Activated CD4-positive, alpha-beta memory T cell treated with anti-CD3 and anti-CD28 coated beads, Interleukin-2, amount 10 ng/mL, durations not matched to agents 7 days and 5 days (primary cell): ENCODE measurements at regions of chr2 and their contacts with region 1.

Region 1: GRCh38 chr2:102240640-102241370 is 54.0 kb downstream of the IL1RL2 start:
- DNase-seq: peak; percentile 89
- H3K4me3 Mint-ChIP-seq: no peak overlapping the region
- H3K27ac Mint-ChIP-seq: peak overlapping the region; percentile 18
- H3K4me1 Mint-ChIP-seq: peaks cover 33% of the 10 kb centered on the region
- H3K27me3 Mint-ChIP-seq: peaks cover 11% of the 10 kb centered on the region

Region 2: DNA sequence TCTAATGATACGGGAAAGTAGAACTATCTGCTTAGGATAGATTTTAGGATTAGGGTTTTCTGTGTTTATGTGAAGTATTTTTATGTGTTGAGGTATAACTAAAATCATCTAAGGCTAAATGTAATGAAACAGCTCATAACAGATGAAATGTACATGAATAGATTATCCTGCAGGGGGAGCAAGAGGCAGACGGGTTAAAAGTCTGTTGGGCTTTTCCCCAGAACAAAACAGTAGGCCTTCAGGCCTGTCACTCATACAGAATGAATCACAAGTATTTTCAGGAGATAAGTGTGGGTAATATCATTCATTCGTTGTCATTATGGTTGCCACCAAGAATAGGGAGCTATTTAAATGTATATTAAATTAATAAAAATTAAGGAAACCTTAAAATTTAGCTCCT is 356.9 kb before region 1 on chr2:
- CTCF ChIA-PET with region 1: interaction called, 43 read pairs
- POLR2A ChIA-PET with region 1: interaction called, 3 read pairs
- DNase-seq: no peak
- H3K4me3 Mint-ChIP-seq: no peak overlapping the region
- H3K27ac Mint-ChIP-seq: no peak overlapping the region
- H3K4me1 Mint-ChIP-seq: no peaks in the 10 kb centered on the region
- H3K27me3 Mint-ChIP-seq: no peaks in the 10 kb centered on the region

Region 3: GRCh38 chr2:101976891-101977290 is 263.9 kb before region 1 on chr2:
- CTCF ChIA-PET with region 1: no interaction called
- POLR2A ChIA-PET with region 1: no interaction called
- DNase-seq: no peak
- H3K4me3 Mint-ChIP-seq: no peak overlapping the region
- H3K27ac Mint-ChIP-seq: no peak overlapping the region
- H3K4me1 Mint-ChIP-seq: peaks cover 9% of the 10 kb centered on the region
- H3K27me3 Mint-ChIP-seq: no peaks in the 10 kb centered on the region

Region 4: DNA sequence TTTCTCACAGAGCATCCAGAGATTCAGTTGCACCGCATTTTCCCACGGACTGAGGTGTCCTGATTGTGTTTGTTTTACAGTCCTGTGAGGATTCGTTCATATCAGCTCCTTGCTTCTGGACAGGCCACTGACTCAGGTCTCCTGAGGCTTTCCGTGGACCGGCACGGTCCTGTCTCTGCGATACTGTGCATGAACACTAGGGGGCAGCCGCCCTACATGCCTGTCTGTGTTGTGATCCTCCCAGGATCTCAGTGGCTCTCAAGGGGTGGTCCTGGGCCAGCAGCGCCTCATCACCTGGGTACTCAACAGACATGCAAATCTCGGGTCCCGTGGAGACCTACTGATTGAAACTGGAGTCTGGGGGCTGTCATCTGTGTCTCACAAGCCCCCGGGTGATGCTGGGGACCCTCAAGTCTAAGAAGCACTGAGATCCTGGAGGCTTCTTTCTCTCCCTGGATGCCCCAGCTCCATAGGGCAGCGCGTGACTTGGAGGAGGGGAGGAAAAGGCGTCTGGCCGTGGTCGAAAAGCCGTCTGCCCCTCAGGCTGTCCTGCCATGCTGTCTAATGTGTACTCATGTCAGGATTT is 220.1 kb before region 1 on chr2:
- CTCF ChIA-PET with region 1: interaction called, 95 read pairs
- POLR2A ChIA-PET with region 1: interaction called, 4 read pairs
- DNase-seq: peak; percentile 83
- H3K4me3 Mint-ChIP-seq: no peak overlapping the region
- H3K27ac Mint-ChIP-seq: no peak overlapping the region
- H3K4me1 Mint-ChIP-seq: peaks cover 17% of the 10 kb centered on the region
- H3K27me3 Mint-ChIP-seq: peaks cover 2% of the 10 kb centered on the region

Region 5: DNA sequence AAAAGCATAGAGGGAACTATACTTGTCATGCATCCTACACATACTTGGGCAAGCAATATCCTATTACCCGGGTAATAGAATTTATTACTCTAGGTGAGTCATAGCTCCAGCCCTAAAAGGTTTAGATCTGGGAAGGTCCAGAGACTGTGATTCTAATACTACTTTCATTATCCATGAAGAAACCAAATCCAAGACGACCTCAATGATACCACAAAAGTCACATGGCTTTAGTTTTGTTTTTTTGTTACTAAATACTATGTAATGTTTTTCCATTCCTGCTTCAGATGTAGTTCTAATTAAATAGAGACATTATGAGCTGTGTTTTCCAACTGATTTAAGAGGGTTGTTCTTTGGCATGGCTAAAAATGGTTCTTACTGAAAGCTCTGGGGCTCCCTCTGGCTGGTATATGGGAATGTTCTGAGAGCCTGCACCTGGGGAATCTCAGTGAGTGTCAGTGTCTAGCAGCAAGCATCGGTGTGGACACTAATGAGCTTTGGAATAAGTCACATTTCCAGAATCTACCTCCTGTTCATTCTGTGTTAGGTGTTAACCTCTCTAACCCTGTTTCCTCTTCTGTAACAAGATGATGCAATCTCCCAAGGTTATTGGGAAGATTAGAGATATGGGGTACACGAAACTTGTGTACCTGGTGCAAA is 74.5 kb before region 1 on chr2:
- CTCF ChIA-PET with region 1: interaction called, 10 read pairs
- POLR2A ChIA-PET with region 1: no interaction called
- DNase-seq: no peak
- H3K4me3 Mint-ChIP-seq: no peak overlapping the region
- H3K27ac Mint-ChIP-seq: no peak overlapping the region
- H3K4me1 Mint-ChIP-seq: peaks cover 5% of the 10 kb centered on the region
- H3K27me3 Mint-ChIP-seq: no peaks in the 10 kb centered on the region

Region 6: GRCh38 chr2:102251042-102251848 is 10.4 kb after region 1 on chr2:
- CTCF ChIA-PET with region 1: interaction called, 71 read pairs
- POLR2A ChIA-PET with region 1: interaction called, 9 read pairs
- DNase-seq: peak; percentile 69
- H3K4me3 Mint-ChIP-seq: peak overlapping the region; percentile 76
- H3K27ac Mint-ChIP-seq: peak overlapping the region; percentile 61
- H3K4me1 Mint-ChIP-seq: peaks cover 41% of the 10 kb centered on the region
- H3K27me3 Mint-ChIP-seq: peaks cover 6% of the 10 kb centered on the region

Region 7: DNA sequence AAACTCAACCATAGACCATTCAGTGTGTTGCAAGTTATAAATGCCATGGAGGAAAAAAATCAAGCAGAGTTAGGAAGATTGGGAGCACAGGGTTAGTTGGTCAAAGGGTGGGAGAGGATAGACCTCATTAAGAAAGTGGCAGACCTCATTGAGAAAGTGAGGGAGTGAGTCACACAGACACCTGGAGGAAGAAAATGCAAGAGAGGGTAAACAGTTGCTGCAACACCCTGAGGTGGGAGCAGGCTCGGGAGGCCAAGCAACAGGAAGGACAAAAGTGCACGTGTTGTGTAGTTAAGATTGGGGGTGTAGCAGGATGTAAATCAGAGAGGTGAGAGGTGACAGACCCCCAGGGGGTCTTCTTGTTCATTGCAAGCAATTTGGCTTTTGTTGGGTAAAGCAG is 76.9 kb after region 1 on chr2:
- CTCF ChIA-PET with region 1: no interaction called
- POLR2A ChIA-PET with region 1: no interaction called
- DNase-seq: no peak
- H3K4me3 Mint-ChIP-seq: no peak overlapping the region
- H3K27ac Mint-ChIP-seq: no peak overlapping the region
- H3K4me1 Mint-ChIP-seq: peaks cover 4% of the 10 kb centered on the region
- H3K27me3 Mint-ChIP-seq: peaks cover 2% of the 10 kb centered on the region

Region 8: DNA sequence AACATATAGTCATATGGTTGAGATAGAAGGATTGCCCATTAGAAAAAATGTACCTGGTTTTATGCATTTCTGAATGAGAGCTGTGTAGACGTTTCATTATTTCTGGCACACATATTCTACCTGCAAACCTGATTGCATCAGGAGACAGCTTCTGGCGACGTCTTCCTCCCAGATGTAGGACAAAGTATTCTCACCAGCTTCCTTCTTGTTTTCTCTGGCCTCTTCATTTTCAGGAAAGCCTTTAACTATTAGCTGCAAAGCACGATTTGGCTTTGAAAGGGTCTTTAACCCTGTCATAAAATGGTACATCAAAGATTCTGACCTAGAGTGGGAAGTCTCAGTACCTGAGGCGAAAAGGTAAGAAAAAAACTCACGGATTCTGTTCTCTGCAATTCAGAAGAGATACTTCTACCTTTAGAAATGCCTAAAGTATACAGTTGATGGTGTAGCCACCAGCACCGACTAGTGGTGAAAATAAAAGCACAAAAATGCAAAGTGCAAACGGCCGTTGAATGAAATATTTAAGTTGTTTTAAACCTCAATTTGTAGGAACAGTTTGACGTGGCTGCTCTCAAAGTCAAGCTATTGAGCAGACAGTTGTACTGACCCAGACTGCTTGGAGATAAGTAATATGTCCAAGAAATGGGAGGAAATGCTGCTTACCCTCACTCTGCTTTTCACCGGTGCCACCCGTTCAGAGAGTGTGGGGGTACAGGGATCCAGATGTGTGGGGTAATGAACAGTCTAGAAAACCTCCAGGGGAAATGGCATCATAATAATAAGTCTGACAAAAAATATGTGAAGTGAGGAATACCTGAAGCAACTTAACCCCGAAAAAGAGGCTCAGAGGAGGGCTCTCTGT is 202.4 kb after region 1 on chr2:
- CTCF ChIA-PET with region 1: interaction called, 46 read pairs
- POLR2A ChIA-PET with region 1: interaction called, 3 read pairs
- DNase-seq: peak; percentile 53
- H3K4me3 Mint-ChIP-seq: no peak overlapping the region
- H3K27ac Mint-ChIP-seq: no peak overlapping the region
- H3K4me1 Mint-ChIP-seq: peaks cover 11% of the 10 kb centered on the region
- H3K27me3 Mint-ChIP-seq: no peaks in the 10 kb centered on the region